AG04450 (cell line): ENCODE measurements at regions of chr6 and their contacts with region 1.

Region 1: GRCh38 chr6:17831135-17831534 is 124.4 kb upstream of the NUP153 start:
- DNase-seq: no peak
- H3K4me3 ChIP-seq: no peak overlapping the region
- H3K27ac ChIP-seq: no peak overlapping the region
- H3K27me3 ChIP-seq: no peaks in the 10 kb centered on the region
- CTCF ChIP-seq: no peak

Region 2: DNA sequence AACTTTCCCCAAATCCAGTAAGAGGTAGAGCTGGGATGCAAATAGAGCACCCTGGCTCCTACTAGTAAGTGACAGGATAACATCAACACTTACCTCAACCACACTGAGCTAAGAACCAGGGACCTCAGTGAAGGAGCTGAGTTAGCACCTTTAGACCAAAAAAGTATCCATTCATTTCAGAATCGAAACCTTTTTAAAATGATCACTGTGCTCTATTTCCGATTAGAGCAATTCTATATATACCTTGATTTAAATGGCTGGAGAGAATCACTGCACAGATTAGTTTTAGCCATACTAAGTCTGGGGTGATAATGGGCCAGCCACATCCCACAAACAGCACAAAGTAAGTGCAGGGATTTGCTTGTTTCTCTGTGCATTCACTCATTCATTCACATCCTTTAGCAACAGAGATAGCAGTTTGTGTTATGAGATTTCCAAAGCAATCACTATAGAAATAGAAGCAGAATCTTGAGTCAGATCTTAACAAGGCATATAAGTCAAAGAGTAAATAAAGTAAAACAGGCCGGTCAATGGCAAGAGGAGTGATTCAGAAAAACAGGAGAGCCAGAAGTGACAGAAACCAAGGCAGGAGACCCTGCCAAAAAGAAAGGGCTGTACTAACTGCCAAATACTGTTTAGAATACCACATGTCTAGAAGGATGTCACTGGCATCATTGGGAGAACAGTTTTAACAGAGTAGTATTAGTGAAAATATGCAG is 20.0 kb after region 1 on chr6:
- CTCF ChIA-PET with region 1: no interaction called
- POLR2A ChIA-PET with region 1: no interaction called
- DNase-seq: no peak
- H3K4me3 ChIP-seq: no peak overlapping the region; the same call in 1 of the 2 replicates
- H3K27ac ChIP-seq: peak overlapping the region; percentile 65
- H3K27me3 ChIP-seq: no peaks in the 10 kb centered on the region
- CTCF ChIP-seq: no peak

Region 3: DNA sequence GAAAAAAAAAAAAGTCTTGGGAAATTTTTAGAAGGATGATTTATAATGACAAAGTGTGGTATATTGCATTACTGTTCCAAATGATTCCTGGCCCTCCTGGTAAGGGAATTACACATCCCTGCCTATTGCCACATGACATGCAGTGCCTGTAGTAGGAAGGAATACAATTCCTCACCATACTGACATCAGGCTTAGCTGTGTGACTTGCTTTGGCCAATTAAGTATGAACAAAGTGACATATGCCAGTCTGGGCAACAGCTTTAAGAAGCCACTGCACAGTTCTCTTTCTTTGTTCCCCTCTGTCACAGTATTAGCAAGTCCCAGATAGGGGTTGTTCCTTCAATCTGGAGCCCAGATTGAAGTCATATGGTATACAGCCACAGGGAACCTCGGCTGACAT is 55.8 kb after region 1 on chr6:
- CTCF ChIA-PET with region 1: no interaction called
- POLR2A ChIA-PET with region 1: interaction called, 11 read pairs
- DNase-seq: no peak
- H3K4me3 ChIP-seq: no peak overlapping the region
- H3K27ac ChIP-seq: no peak overlapping the region
- H3K27me3 ChIP-seq: no peaks in the 10 kb centered on the region
- CTCF ChIP-seq: no peak